Astrocyte of the cerebellum (primary cell): ENCODE measurements at regions of chr3 and their contacts with region 1.

Region 1: GRCh38 chr3:65979162-65979561 is 59.6 kb downstream of the MAGI1 start:
- DNase-seq: peak; percentile 57
- H3K4me3 ChIP-seq: no peak overlapping the region
- CTCF ChIP-seq: no peak

Region 2: GRCh38 chr3:66021731-66022141 is 42.6 kb after region 1 on chr3:
- in situ Hi-C with region 1: loop called (anchors 5 kb)
- DNase-seq: no peak
- H3K4me3 ChIP-seq: no peak overlapping the region
- CTCF ChIP-seq: no peak